Aorta (tissue), 5 donors: ENCODE measurements at regions of chr2 and their contacts with region 1.

Region 1: DNA sequence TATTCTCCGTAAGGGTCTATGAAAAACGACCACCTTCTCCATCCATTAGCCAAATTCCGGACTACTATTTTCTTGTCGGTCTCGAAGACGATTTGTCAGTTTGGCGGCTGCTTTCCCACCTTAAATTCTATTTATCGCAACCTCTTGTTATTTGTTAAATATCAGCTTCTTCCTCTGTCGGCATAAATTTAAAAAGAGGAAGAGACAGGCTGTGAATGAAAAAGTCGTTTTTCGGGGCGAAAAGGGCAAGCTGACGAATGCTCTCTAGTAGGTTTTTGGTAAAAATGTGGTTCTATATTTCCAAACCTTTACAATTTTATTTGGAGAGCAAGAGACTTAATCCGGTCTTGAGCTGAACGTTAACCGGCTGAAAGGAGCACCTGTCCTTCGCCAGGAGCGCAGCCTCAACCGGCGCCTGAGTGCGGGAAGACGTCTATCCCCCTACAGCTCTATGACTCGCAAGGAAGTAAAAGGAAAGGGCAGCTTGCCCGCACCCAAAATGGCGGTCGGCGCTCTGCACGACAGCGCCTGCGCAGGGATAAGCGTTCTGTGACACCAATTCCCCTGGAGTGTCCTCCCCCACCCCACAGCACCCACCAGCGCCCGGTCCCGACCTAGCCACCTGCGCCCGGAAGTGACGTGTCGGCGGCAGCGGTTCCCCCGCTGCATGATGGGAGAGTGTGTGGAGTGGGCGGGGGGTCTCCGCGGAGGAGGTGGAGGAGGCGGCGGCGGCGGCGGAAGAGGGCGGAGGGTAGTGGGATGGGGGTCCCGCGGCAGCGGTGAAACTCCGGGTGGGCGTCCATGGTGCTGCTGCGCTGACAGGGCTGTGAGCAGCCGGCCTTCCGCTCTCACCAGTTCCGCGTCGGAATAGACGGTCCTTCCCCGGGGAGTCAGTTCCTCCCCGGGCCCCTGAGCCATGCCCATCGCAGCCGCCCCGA is at the start of gene AFTPH:
- DNase-seq: peak; percentile 99 to 100
- ATAC-seq: peak; percentile 99
- H3K4me3 ChIP-seq: peak within 1 kb of the TSS; percentile 83 to 86
- H3K27ac ChIP-seq: peak within 1 kb of the TSS; percentile 20 to 79
- H3K4me1 ChIP-seq: no peaks in the 10 kb centered on the region
- H3K27me3 ChIP-seq: no peaks in the 10 kb centered on the region
- total RNA-seq, gene AFTPH: 28.3 to 30.6 TPM

Region 2: GRCh38 chr2:64554117-64554516 is 30.2 kb after region 1 on chr2:
- intact Hi-C with region 1: loop called (anchors 2 to 5 kb)
- DNase-seq: no peak
- ATAC-seq: no peak
- H3K4me3 ChIP-seq: no peak overlapping the region
- H3K27ac ChIP-seq: no peak overlapping the region
- H3K4me1 ChIP-seq: peaks cover 0 to 3% of the 10 kb centered on the region in 2 donors
- H3K27me3 ChIP-seq: no peaks in the 10 kb centered on the region

Region 3: GRCh38 chr2:64562148-64562784 is 38.3 kb after region 1 on chr2:
- intact Hi-C with region 1: loop called in 1 of 2 experiments (anchors 5 kb)
- DNase-seq: no peak
- ATAC-seq: no peak
- H3K4me3 ChIP-seq: no peak overlapping the region
- H3K27ac ChIP-seq: no peak overlapping the region
- H3K4me1 ChIP-seq: peaks cover 0 to 3% of the 10 kb centered on the region in 2 donors
- H3K27me3 ChIP-seq: no peaks in the 10 kb centered on the region

Region 4: DNA sequence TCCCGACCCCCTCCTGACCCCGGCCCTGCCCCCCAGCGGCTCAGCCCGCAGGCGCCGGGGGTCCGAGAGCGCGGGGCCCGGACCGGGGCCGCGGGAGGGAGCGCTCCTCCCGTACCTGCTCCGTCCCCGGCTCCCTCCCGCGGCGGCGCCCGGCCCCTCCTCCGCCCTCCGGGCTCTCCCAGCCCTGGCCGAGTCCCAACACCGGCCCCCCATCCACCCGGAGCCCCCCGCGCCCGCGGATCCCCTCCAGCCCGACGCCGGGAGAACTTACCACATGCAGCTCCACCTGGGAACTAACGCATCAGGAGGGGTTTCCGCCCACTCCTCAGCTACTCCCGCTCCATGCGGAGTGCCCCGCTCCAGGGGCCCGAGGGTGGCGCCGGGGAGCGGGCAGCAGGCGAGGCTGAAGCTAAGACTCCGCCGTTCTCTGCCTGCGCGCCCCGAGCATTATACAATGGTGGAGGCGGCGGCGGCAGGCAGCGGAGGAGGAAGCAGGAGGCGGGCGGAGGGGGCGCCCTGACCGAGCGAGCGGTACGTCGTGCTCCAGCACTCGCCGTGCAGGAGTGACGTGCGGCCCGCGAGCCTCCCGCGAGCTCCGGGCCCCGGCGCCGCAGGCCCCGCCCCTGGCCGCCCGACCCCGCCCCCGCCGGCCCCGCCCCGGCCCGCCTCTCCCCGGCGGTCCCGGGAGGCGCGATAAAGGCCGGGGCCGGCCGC is 129.6 kb after region 1 on chr2 and contains the start of gene SERTAD2:
- intact Hi-C with region 1: loop called in 1 of 2 experiments (anchors 10 kb)
- DNase-seq: peak; percentile 94 to 95
- ATAC-seq: peak; percentile 95
- H3K4me3 ChIP-seq: peak within 1 kb of the TSS; percentile 79 to 97
- H3K27ac ChIP-seq: peak within 1 kb of the TSS; percentile 95 to 97
- H3K4me1 ChIP-seq: no peaks in the 10 kb centered on the region
- H3K27me3 ChIP-seq: no peaks in the 10 kb centered on the region
- total RNA-seq, gene SERTAD2: 23.5 to 27.4 TPM

Region 5: DNA sequence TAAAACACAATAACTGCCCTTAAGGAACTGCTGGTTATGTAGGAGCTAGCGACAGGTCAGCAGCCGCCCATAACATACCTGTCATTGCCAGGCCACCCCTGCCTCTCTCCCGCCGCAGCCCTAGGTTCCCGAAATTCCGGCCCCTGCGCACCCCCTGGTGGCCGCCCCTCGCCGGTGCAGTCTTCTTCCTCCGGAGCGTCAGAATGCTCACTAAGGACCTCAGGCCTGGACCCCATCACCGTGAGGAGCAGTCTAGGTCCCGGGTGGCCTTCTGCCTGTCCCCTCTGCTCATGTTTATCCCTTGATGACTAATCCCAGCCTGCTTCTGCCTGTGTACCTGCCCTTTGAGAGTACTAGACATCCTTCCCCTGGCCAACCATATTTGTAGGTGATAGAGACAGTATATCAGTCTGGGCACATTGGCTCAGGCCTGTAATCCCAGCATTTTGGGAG is 349.6 kb after region 1 on chr2:
- intact Hi-C with region 1: loop called in 1 of 2 experiments (anchors 5 kb)
- DNase-seq: peak; percentile 82 to 95
- ATAC-seq: peak; percentile 85
- H3K4me3 ChIP-seq: no peak overlapping the region
- H3K27ac ChIP-seq: no peak overlapping the region
- H3K4me1 ChIP-seq: no peaks in the 10 kb centered on the region
- H3K27me3 ChIP-seq: no peaks in the 10 kb centered on the region